Gastrocnemius medialis (tissue), 4 donors: ENCODE measurements at regions of chr19 and their contacts with region 1.

Region 1: DNA sequence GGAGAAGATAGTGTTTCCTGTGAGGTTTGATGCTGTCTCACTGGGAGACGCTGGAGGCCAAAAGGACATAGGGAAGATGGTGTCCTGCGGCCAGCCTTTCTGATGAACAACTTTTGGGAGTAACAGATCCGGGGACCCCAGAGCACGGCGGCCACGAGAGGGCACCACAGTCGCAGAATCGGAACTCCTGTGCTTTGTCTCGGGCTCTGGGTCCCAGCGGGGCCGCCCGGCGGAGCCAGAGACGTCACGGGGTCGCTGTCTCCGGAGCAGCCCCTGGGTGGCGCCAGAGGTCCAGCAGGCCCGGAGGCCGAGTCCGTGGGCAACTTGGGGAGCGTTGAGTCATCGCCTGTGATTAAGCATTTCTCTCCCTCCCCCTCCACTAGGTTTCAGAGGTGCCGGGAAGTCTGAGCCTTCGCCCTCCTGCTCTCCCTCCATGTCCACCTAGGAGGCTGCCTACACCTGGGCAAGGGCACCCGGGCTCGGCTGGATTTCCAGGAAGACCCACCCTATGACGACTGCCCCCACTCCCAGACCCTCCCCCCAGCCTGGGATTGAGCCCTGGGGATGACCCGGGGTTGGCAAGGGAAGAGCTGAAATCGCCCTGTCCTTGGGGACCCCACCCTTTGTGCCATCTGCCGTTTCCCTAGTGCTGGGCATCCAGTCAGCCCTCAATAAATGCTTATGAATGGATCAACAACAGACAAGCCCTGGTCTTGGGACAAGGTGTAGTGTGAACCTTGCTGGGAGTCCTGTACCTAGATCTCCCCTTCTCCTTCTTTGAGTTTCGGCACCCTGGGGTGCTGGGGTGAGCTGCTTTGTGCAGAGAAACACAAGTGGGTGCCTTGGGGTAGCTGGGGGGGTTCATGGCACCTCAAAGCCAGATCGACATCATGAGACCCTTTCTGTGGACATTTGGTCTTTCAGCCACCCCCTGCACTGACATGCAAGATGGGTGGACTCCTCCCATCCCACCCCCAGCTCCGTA is 3.4 kb downstream of the NANOS3 start:
- DNase-seq: peak; percentile 94 to 98
- ATAC-seq: peak; percentile 96 to 97
- H3K4me3 ChIP-seq: peak overlapping the region; percentile 33 to 49 (median 44)
- H3K27ac ChIP-seq: peak overlapping the region; percentile 77 to 92 (median 80)
- H3K4me1 ChIP-seq: peaks cover 13 to 17% of the 10 kb centered on the region in 2 donors
- H3K27me3 ChIP-seq: no peaks in the 10 kb centered on the region
- CTCF ChIP-seq: peak; percentile 98 to 100 (median 99)
- POLR2A ChIP-seq: no peak

Region 2: DNA sequence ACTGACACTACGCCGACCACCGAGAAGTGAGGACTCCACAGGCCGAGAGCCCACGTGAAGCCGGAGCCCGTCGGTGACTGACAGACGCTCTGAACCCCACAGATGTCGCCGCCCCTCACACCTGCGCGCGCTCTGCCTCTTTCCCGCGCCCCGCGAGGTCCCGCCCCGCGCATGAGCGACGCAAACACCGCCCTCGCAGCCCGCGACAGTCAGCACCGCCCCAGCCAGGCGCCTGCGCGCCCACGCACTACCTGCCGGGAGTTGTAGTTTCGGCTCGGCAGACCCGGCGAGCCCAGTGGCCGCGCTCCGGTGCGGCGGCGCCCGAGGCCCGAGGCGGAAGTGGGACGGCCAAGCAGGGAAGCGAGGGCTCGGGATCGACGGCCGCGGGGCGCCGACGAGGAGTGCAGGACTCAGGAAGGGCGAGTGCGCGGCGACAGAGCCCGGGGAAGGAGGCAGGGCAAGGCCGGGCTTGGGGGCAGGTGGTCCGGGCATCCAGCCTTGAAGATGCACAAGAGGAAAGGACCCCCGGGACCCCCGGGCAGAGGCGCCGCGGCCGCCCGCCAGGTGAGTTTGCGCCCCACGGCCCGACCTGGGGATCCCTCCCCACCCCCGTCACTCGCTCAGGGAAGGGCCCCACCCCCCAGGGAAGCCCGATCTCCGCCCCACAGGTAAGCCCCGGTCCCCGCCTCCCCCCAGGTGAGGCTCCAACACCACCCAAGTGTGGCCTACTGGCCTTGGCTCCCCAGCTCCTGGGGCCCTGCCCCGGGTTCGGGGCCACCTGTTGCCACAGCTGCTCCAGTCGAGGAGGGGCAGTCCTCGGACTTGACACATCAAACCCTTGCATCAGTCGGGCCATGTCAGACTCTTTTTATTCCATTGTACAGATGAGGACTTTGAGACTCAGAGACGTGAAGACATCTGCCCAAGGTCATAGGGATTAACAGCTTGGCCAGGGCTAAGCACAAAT is 25.9 kb after region 1 on chr19 and contains the starts of genes BRME1 and CC2D1A:
- in situ Hi-C with region 1: no loop called
- intact Hi-C with region 1: loop called (anchors 2 kb)
- DNase-seq: peak; percentile 85 to 88
- ATAC-seq: peak; percentile 93 to 94
- H3K4me3 ChIP-seq: peak within 1 kb of the TSS; percentile 72 to 96 (median 90)
- H3K27ac ChIP-seq: peak within 1 kb of the TSS; percentile 75 to 86 (median 76)
- H3K4me1 ChIP-seq: peaks cover 8 to 12% of the 10 kb centered on the region in 2 donors
- H3K27me3 ChIP-seq: no peaks in the 10 kb centered on the region
- CTCF ChIP-seq: peak in 1 of 5 experiments; percentile 13
- POLR2A ChIP-seq: peak; percentile 39 to 61
- total RNA-seq, gene BRME1: 0.19 to 1.0 (median 0.56) TPM
- total RNA-seq, gene CC2D1A: 22.3 to 44.9 (median 33.7) TPM

Region 3: DNA sequence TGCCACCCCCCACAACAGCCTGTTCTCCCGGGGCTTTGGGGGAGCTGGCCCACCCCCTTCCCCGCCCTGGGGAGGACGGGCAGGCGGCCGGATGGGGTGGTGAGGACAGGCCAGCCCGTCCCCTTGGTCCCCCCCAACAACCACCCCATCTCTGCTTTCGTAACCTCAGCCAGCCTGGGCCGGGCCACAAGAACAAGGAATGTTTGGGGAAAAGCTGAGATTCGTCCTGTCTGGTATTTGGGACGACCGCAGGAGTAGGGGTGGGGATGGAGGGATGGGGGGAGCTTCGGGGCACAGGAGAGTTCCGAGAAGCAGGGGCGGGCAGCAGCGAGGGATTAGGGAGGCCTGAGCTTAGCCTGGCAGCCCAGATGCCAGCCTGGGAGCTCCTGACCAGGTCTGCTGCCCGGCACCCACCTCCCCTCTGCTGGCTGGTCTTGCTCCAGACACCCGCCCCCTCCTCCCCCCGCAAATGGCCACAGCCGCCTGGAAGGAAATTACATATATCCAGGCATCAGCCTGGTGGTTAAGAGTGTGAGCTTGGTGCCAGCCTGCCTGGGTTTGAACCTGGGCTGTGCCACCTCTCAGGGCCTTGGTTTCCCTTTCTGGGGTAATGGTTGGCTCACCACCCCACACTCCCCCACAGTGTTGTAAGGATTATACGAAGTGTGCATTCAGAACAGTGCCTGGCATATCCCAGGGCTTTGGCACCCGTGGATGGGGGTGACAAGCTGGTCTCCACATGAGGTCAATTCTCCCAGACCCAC is 58.1 kb after region 1 on chr19 and contains the start of gene PODNL1:
- in situ Hi-C with region 1: no loop called
- intact Hi-C with region 1: no loop called
- DNase-seq: no peak
- ATAC-seq: no peak
- H3K4me3 ChIP-seq: no peak within 1 kb of the TSS
- H3K27ac ChIP-seq: no peak within 1 kb of the TSS
- H3K4me1 ChIP-seq: no peaks in the 10 kb centered on the region
- H3K27me3 ChIP-seq: peaks cover 7 to 15% (median 11%) of the 10 kb centered on the region in 3 donors
- CTCF ChIP-seq: no peak
- POLR2A ChIP-seq: no peak
- total RNA-seq, gene PODNL1: 0.55 to 0.61 TPM in 2 of 4 donors, not detected in the others

Region 4: DNA sequence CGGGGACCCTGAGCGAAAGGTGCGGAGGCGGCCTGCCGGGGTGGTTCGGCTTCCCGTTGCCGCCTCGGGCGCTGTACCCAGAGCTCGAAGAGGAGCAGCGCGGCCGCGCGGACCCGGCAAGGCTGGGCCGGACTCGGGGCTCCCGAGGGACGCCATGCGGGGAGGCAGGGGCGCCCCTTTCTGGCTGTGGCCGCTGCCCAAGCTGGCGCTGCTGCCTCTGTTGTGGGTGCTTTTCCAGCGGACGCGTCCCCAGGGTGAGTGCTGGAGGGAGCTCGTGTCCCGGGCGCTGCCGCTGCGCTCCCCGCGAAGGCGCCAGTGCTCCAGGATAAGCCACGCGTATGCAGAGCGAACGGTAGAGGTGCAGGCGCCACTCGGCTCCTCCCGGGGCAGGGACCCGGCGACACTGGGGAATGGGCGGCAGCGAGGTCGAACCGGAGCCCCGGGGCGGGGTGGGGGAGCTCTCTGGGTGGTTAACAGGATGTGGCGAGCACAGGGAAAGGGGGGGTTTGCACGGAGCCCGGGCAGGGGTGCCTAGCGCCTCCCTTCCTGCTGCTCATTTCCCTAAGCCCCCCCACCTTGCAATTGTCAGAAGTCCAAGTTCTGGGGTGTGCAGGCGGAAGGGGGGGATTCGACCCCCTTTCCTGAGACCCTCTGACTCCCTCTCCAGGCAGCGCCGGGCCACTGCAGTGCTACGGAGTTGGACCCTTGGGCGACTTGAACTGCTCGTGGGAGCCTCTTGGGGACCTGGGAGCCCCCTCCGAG is 151.5 kb after region 1 on chr19 and contains the start of gene IL27RA:
- in situ Hi-C with region 1: no loop called
- intact Hi-C with region 1: loop called (anchors 1 kb)
- DNase-seq: peak; percentile 31 to 35
- ATAC-seq: peak; percentile 74 to 81
- H3K4me3 ChIP-seq: peak within 1 kb of the TSS; percentile 54 to 95 (median 67)
- H3K27ac ChIP-seq: peak within 1 kb of the TSS; percentile 61 to 77 (median 76)
- H3K4me1 ChIP-seq: peaks cover 0 to 5% of the 10 kb centered on the region in 2 donors
- H3K27me3 ChIP-seq: no peaks in the 10 kb centered on the region
- CTCF ChIP-seq: peak; percentile 37 to 74 (median 59)
- POLR2A ChIP-seq: peak; percentile 19 to 40
- total RNA-seq, gene IL27RA: 1.4 to 3.7 (median 2.0) TPM

Region 5: GRCh38 chr19:14059093-14059480 is 178.7 kb after region 1 on chr19:
- in situ Hi-C with region 1: no loop called
- intact Hi-C with region 1: no loop called
- DNase-seq: no peak
- ATAC-seq: no peak
- H3K4me3 ChIP-seq: no peak overlapping the region
- H3K27ac ChIP-seq: no peak overlapping the region
- H3K4me1 ChIP-seq: peaks cover 0 to 4% of the 10 kb centered on the region in 2 donors
- H3K27me3 ChIP-seq: peaks cover 20 to 60% (median 42%) of the 10 kb centered on the region in 3 donors
- CTCF ChIP-seq: peak in 4 of 5 experiments; percentile 49 to 68 (median 56)
- POLR2A ChIP-seq: no peak

Region 6: GRCh38 chr19:14136509-14137281 is 256.3 kb after region 1 on chr19 and contains the start of gene ASF1B:
- in situ Hi-C with region 1: no loop called
- intact Hi-C with region 1: loop called (anchors 5 kb)
- DNase-seq: peak; percentile 99 to 100
- ATAC-seq: peak; percentile 86 to 94
- H3K4me3 ChIP-seq: peak within 1 kb of the TSS; percentile 65 to 81 (median 76)
- H3K27ac ChIP-seq: peak within 1 kb of the TSS; percentile 91 to 99 (median 98)
- H3K4me1 ChIP-seq: peaks cover 24 to 32% of the 10 kb centered on the region in 2 donors
- H3K27me3 ChIP-seq: no peaks in the 10 kb centered on the region
- CTCF ChIP-seq: peak; percentile 86 to 92 (median 87)
- POLR2A ChIP-seq: peak; percentile 81 to 87
- total RNA-seq, gene ASF1B: 1.2 to 4.1 (median 1.5) TPM in 3 of 4 donors, not detected in the other

Region 7: DNA sequence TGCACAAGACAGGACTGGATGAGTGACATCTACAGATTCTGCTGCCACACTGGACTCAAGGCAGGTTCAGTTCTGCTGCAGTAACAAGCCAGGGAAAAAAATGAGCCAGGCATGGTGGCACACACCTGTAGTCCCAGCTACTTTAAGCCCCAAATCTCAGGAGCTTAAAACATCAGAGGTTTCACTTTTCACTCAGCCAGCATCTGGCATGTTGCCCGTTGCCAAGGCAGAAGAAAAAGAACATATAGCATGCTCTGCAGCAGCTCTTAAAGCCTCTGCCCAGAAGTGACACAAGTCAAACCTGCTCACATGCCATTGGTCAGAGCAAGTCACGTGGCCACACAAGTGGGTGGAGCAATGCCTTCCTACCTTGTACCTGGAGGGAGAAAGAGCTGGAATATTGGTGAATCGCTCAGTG is 486.2 kb after region 1 on chr19:
- in situ Hi-C with region 1: loop called in 1 of 4 experiments (anchors 25 kb)
- intact Hi-C with region 1: no loop called
- DNase-seq: peak in 1 of 2 donors; percentile 44
- ATAC-seq: peak in 1 of 2 donors; percentile 35
- H3K4me3 ChIP-seq: no peak overlapping the region
- H3K27ac ChIP-seq: no peak overlapping the region
- H3K4me1 ChIP-seq: peaks cover 5 to 10% of the 10 kb centered on the region in 2 donors
- H3K27me3 ChIP-seq: no peaks in the 10 kb centered on the region
- CTCF ChIP-seq: no peak
- POLR2A ChIP-seq: no peak